MCF 10A (cell line): ENCODE measurements at regions of chr3 and their contacts with region 1.

Region 1: DNA sequence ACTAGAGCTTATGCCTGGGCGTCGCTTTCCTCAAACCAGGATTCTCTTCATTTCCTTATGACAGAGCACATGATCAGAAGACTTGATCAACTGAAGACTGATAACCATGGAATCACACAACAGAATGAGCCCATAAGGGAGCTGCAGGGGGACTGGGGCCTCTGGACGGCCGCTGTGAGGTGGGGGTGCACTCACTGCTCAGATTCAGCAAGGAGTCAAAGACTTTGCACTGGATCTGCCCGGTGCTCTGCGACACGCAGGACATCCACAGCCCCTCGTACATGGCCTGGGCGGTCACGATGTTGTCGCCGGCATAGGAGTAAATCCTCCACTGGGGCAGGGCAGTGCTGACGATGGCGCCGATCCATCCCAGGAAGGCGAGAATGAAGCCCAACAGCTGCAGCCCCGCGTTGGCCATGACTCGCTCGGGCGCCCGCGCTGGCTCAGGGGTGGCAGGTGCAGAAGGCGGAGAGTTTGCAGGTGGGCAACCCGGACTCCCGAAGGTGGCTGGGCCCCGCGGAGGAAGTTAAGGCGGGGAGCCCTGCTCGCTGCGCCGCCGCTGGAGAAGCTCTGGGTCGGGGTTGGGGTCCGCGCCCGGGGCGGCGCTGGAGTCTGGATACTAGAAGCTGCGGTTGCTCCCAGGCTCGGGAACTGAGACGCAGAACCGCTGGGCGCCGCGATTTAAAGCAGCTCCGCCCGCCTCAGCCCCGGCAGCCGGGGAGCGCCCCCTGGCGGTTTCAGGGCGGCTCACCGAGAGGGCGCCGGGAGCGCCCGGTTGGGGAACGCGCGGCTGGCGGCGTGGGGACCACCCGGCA is at the start of gene CLDN1:
- DNase-seq: peak; percentile 84
- H3K4me3 Mint-ChIP-seq: peak within 1 kb of the TSS; percentile 95
- H3K27ac Mint-ChIP-seq: peak within 1 kb of the TSS; percentile 96
- H3K4me1 Mint-ChIP-seq: peaks cover 51% of the 10 kb centered on the region
- H3K27me3 Mint-ChIP-seq: no peaks in the 10 kb centered on the region
- CTCF ChIP-seq: peak; percentile 92
- total RNA-seq, gene CLDN1: 197 and 263 TPM in 2 replicates

Region 2: DNA sequence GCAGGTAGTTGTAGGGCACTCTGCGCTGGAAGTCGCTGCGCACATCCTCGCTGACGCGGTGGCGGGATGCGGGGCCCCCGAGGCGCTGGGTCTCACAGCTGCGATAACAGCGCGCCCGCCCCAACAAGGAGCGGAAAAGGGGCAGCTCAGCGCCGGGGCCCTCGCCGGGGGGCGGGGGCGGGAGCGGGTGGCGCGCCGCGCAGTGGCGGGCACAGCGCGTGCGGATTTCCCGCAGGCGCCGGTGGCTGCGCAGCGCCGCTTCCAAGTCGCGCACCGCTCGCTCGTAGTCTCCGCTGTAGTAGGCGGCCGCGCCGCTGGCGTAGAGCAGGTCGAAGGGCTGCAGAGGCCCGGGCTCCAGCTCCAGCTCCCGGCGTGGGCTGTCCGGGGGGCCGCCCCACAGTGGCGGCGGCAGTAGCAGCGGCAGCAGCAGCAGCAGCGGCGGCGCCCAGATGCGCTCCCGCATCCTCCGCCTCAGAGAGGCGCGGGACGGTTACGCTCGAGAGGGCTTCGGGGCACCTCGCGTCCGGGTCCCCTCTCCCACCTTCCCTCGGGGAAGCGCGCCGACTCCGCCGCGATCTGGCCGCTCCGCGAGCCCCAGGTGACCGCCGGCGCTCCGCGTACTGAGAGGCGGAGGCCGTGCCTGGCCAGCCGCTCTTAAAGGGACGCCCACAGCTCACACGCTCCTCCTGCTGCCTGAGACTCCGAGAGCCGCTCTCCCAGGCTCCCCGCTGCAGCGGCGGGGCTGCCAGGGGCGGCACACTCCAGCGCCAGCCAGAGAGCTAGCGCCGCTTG is 201.5 kb before region 1 on chr3 and contains the start of gene P3H2:
- CTCF ChIA-PET with region 1: no interaction called
- POLR2A ChIA-PET with region 1: interaction called, 3 read pairs
- intact Hi-C with region 1: loop called (anchors 2 kb)
- DNase-seq: peak; percentile 91
- H3K4me3 Mint-ChIP-seq: peak within 1 kb of the TSS; percentile 95
- H3K27ac Mint-ChIP-seq: peak within 1 kb of the TSS; percentile 70
- H3K4me1 Mint-ChIP-seq: peaks cover 51% of the 10 kb centered on the region
- H3K27me3 Mint-ChIP-seq: no peaks in the 10 kb centered on the region
- CTCF ChIP-seq: peak; percentile 32
- total RNA-seq, gene P3H2: 19.8 and 60.2 TPM in 2 replicates

Region 3: DNA sequence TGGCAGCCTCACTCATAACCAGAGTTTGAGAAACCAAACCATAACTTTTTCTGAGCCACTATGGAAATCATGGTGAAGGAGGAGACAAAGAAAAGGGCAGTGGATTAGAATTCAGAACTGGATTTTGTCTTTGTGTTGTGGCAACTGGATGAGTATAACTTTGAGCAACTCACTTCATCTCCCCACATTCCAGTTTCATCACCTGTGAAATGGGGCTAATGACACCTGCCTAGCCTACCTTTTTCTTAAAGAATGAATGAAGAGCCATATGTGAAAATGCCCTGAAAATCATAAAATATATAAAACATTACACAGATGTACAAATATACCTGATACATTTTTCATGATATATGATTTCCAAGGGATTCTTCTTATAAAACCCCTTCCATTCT is 91.6 kb before region 1 on chr3:
- CTCF ChIA-PET with region 1: interaction called, 195 read pairs
- POLR2A ChIA-PET with region 1: interaction called, 70 read pairs
- intact Hi-C with region 1: loop called (anchors 1 kb)
- DNase-seq: no peak
- H3K4me3 Mint-ChIP-seq: peak overlapping the region; percentile 57
- H3K27ac Mint-ChIP-seq: peak overlapping the region; percentile 81
- H3K4me1 Mint-ChIP-seq: peaks cover 38% of the 10 kb centered on the region
- H3K27me3 Mint-ChIP-seq: no peaks in the 10 kb centered on the region
- CTCF ChIP-seq: no peak

Region 4: DNA sequence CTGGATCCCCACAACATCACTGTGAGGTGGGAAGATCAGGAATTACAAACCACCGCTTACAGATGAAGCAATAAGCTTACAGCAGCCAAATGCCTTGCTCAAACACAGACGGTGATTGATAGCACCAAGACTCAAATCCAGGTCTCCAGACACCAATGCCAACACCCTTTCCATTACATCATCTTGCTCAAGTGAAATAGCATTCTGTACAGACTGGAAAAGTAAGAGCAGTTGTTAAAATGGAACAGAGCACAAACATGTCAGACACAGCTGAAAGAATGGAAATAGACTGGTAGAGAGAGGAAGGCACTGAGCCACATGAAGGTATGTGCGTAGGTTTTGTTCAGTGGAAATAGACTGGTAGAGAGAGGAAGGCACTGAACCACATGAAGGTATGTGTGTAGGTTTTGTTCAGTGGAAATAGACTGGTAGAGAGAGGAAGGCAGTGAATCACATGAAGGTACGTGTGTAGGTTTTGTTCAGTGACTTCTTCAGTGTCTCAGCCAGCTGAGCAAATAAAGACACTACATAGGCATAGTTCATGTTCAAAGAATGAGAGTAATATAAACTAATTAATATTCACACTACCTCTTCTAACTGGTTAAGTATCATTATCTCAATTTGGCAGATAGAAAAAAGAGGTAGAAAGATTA is 15.4 kb before region 1 on chr3:
- CTCF ChIA-PET with region 1: interaction called, 5 read pairs
- POLR2A ChIA-PET with region 1: interaction called, 153 read pairs
- intact Hi-C with region 1: no loop called
- DNase-seq: peak; percentile 94
- H3K4me3 Mint-ChIP-seq: peak overlapping the region; percentile 0
- H3K27ac Mint-ChIP-seq: peak overlapping the region; percentile 29
- H3K4me1 Mint-ChIP-seq: peaks cover 29% of the 10 kb centered on the region
- H3K27me3 Mint-ChIP-seq: no peaks in the 10 kb centered on the region
- CTCF ChIP-seq: no peak

Region 5: GRCh38 chr3:190359813-190360212 is 37.8 kb after region 1 on chr3:
- CTCF ChIA-PET with region 1: interaction called, 9 read pairs
- POLR2A ChIA-PET with region 1: interaction called, 19 read pairs
- intact Hi-C with region 1: no loop called
- DNase-seq: no peak
- H3K4me3 Mint-ChIP-seq: no peak overlapping the region
- H3K27ac Mint-ChIP-seq: peak overlapping the region; percentile 8
- H3K4me1 Mint-ChIP-seq: peaks cover 22% of the 10 kb centered on the region
- H3K27me3 Mint-ChIP-seq: no peaks in the 10 kb centered on the region
- CTCF ChIP-seq: no peak

Region 6: GRCh38 chr3:190424478-190425439 is 102.8 kb after region 1 on chr3:
- CTCF ChIA-PET with region 1: interaction called, 7 read pairs
- POLR2A ChIA-PET with region 1: interaction called, 15 read pairs
- intact Hi-C with region 1: loop called (anchors 1 kb)
- DNase-seq: peak; percentile 83
- H3K4me3 Mint-ChIP-seq: no peak overlapping the region
- H3K27ac Mint-ChIP-seq: peak overlapping the region; percentile 71
- H3K4me1 Mint-ChIP-seq: no peaks in the 10 kb centered on the region
- H3K27me3 Mint-ChIP-seq: no peaks in the 10 kb centered on the region
- CTCF ChIP-seq: peak; percentile 64

Region 7: GRCh38 chr3:191388823-191389222 is 1066.8 kb after region 1 on chr3:
- CTCF ChIA-PET with region 1: no interaction called
- POLR2A ChIA-PET with region 1: no interaction called
- intact Hi-C with region 1: no loop called
- DNase-seq: no peak
- H3K4me3 Mint-ChIP-seq: no peak overlapping the region
- H3K27ac Mint-ChIP-seq: peak overlapping the region; percentile 85
- H3K4me1 Mint-ChIP-seq: no peaks in the 10 kb centered on the region
- H3K27me3 Mint-ChIP-seq: no peaks in the 10 kb centered on the region
- CTCF ChIP-seq: peak; percentile 36